CD4-positive, alpha-beta T cell (primary cell): ENCODE measurements at regions of chr5 and their contacts with region 1.

Region 1: DNA sequence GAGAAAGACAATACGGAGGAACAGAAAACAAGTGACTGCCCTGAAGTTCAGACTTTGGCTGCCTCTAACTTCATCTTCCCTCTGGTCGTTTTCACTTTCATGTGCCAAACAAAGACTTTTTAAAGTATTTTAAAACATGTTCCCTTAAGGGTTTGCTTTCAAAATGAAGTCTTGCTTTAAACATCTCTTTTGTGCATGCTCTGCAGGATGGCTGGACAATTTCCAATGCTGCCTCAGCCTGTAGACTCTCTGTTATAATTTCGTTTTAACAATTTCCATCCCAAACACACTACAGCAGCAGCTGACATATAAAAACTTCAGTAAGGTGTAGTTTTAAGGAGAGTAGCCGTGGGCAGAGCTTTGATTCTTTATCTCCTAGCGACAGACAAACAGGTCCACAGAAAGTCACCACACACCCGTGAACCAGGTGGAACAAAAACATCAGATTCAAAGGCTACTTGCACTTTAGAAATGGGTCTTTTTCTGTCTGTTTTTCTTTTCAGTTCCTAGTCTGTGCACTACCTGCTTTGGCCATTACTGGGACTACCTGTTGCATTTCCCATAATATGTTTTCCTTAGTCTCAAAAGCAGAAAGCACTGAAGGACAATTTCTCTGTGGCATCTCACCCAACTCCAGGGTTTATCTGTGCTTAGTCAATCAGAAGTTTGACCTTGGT is 308.9 kb downstream of the DTWD2 start:
- DNase-seq: no peak
- ATAC-seq: no peak
- H3K4me3 ChIP-seq: no peak overlapping the region
- H3K4me3 Mint-ChIP-seq: no peak overlapping the region
- H3K27ac ChIP-seq: no peak overlapping the region
- H3K27ac Mint-ChIP-seq: no peak overlapping the region
- H3K4me1 ChIP-seq: no peaks in the 10 kb centered on the region
- H3K4me1 Mint-ChIP-seq: no peaks in the 10 kb centered on the region
- H3K27me3 ChIP-seq: no peaks in the 10 kb centered on the region
- H3K27me3 Mint-ChIP-seq: no peaks in the 10 kb centered on the region
- CTCF ChIP-seq: no peak

Region 2: GRCh38 chr5:118604106-118604505 is 75.3 kb before region 1 on chr5:
- CTCF ChIA-PET with region 1: no interaction called
- POLR2A ChIA-PET with region 1: no interaction called
- intact Hi-C with region 1: no loop called
- DNase-seq: no peak
- ATAC-seq: no peak
- H3K4me3 ChIP-seq: no peak overlapping the region
- H3K4me3 Mint-ChIP-seq: no peak overlapping the region
- H3K27ac ChIP-seq: no peak overlapping the region
- H3K27ac Mint-ChIP-seq: no peak overlapping the region
- H3K4me1 ChIP-seq: no peaks in the 10 kb centered on the region
- H3K4me1 Mint-ChIP-seq: no peaks in the 10 kb centered on the region
- H3K27me3 ChIP-seq: no peaks in the 10 kb centered on the region
- H3K27me3 Mint-ChIP-seq: no peaks in the 10 kb centered on the region
- CTCF ChIP-seq: no peak

Region 3: GRCh38 chr5:118722165-118723020 is 43.0 kb after region 1 on chr5:
- CTCF ChIA-PET with region 1: no interaction called
- POLR2A ChIA-PET with region 1: no interaction called
- intact Hi-C with region 1: loop called in 1 of 2 experiments (anchors 1 kb)
- DNase-seq: no peak
- ATAC-seq: no peak
- H3K4me3 ChIP-seq: no peak overlapping the region
- H3K4me3 Mint-ChIP-seq: no peak overlapping the region
- H3K27ac ChIP-seq: no peak overlapping the region
- H3K27ac Mint-ChIP-seq: no peak overlapping the region
- H3K4me1 ChIP-seq: no peaks in the 10 kb centered on the region
- H3K4me1 Mint-ChIP-seq: no peaks in the 10 kb centered on the region
- H3K27me3 ChIP-seq: no peaks in the 10 kb centered on the region
- H3K27me3 Mint-ChIP-seq: no peaks in the 10 kb centered on the region
- CTCF ChIP-seq: no peak